ENCODE measurements at regions of chr14 and their contacts with region 1.

Region 1: DNA sequence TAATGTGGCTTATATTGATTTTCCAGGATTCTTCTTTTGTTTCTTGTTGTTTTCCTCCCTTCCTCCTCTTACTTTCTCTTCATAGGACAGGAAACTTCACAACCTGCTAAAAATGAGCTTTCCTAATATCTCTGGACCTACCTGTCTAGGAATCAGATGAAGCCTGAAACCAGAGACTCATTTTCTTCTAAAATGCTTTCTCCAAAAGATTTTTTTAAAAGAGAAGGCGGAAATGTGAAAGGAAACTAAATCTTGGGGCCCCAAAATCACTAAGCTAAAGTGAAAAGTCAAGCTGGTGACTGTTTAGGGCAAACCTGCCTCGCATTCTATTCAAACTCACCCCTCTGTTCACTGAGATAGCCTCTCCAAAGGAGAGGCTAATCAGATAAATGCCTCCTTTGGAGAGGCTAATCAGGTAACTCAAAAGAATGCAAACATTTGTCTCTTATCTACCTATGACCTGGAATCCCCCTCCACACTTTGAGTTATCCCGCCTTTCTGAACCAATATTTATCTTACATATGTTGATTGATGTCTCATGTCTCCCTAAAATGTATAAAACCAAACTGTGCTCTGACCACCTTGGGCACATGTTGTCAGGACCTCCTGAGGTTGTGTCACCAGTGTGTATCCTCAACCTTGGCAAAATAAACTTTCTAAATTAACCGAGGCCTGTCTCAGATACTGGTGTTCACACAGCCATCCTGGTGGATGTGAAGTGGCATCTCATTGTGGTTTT is 72.7 kb upstream of the HECTD1 start:
- DNase-seq: no peak
- ATAC-seq: no peak
- H3K4me3 ChIP-seq: no peak overlapping the region
- H3K4me3 Mint-ChIP-seq: no peak overlapping the region
- H3K27ac ChIP-seq: no peak overlapping the region
- H3K27ac Mint-ChIP-seq: no peak overlapping the region
- H3K4me1 ChIP-seq: no peaks in the 10 kb centered on the region
- H3K4me1 Mint-ChIP-seq: no peaks in the 10 kb centered on the region
- H3K27me3 ChIP-seq: no peaks in the 10 kb centered on the region
- H3K27me3 Mint-ChIP-seq: no peaks in the 10 kb centered on the region

Region 2: GRCh38 chr14:31078766-31079165 is 201.5 kb before region 1 on chr14:
- CTCF ChIA-PET with region 1: no interaction called
- POLR2A ChIA-PET with region 1: interaction called in 1 of 2 experiments, 13 read pairs
- DNase-seq: no peak
- ATAC-seq: no peak
- H3K4me3 ChIP-seq: no peak overlapping the region
- H3K4me3 Mint-ChIP-seq: no peak overlapping the region
- H3K27ac ChIP-seq: no peak overlapping the region
- H3K27ac Mint-ChIP-seq: no peak overlapping the region
- H3K4me1 ChIP-seq: no peaks in the 10 kb centered on the region
- H3K4me1 Mint-ChIP-seq: no peaks in the 10 kb centered on the region
- H3K27me3 ChIP-seq: no peaks in the 10 kb centered on the region
- H3K27me3 Mint-ChIP-seq: no peaks in the 10 kb centered on the region

Region 3: GRCh38 chr14:31336652-31337051 is 56.4 kb after region 1 on chr14:
- CTCF ChIA-PET with region 1: no interaction called
- POLR2A ChIA-PET with region 1: no interaction called
- DNase-seq: no peak
- ATAC-seq: no peak
- H3K4me3 ChIP-seq: no peak overlapping the region
- H3K4me3 Mint-ChIP-seq: no peak overlapping the region
- H3K27ac ChIP-seq: no peak overlapping the region
- H3K27ac Mint-ChIP-seq: no peak overlapping the region
- H3K4me1 ChIP-seq: no peaks in the 10 kb centered on the region
- H3K4me1 Mint-ChIP-seq: no peaks in the 10 kb centered on the region
- H3K27me3 ChIP-seq: no peaks in the 10 kb centered on the region
- H3K27me3 Mint-ChIP-seq: no peaks in the 10 kb centered on the region

Measured in T-cell (primary cell).